CD4-positive, alpha-beta T cell (primary cell): ENCODE measurements at regions of chr14 and their contacts with region 1.

Region 1: DNA sequence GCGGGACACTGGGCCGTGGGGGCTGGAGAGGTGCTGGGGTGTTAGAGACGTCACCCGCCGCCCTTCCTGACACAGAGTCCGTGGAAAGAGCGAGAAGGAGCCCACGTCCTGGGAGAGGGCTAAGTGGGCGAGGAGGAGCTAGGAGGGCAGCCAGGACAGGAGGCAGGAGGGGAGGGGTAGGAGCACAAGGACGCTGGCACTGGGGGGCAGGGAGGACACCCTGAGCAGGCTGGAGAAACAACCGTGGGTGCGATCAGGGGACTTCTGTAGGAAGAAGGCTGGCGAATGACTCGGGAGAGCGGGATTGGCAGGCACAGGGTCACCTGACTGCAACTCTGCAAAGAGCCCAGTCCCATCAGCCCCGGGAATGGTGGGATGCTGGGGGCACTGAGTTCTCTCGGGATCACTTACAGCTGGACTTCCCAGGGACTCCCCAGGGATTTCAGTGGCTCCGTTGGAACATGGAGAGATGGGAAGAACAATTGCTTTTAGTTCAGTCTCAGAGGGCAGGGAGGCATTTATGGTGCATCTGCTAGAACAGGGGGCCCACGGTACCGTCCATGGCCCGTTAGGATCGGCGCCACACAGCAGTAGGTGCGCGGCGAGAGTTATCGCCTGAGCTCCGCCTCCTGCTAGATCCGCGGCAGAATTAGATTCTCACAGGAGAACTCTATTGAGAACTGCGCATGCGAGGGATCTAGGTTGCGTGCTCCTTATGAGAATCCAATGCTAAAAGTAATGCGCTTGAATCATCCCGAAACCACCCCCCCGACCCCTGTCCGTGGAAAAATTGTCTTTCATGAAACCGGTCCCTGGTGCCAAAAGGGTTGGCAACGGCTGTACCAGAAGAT is 24.3 kb downstream of the UBR7 start:
- DNase-seq: peak in 1 of 14 experiments; percentile 4
- ATAC-seq: no peak
- H3K4me3 ChIP-seq: peak overlapping the region; percentile 12
- H3K4me3 Mint-ChIP-seq: peak overlapping the region; percentile 39
- H3K27ac ChIP-seq: no peak overlapping the region
- H3K27ac Mint-ChIP-seq: no peak overlapping the region
- H3K4me1 ChIP-seq: peaks cover 17% of the 10 kb centered on the region
- H3K4me1 Mint-ChIP-seq: peaks cover 11% of the 10 kb centered on the region
- H3K27me3 ChIP-seq: no peaks in the 10 kb centered on the region
- H3K27me3 Mint-ChIP-seq: no peaks in the 10 kb centered on the region
- CTCF ChIP-seq: no peak

Region 2: DNA sequence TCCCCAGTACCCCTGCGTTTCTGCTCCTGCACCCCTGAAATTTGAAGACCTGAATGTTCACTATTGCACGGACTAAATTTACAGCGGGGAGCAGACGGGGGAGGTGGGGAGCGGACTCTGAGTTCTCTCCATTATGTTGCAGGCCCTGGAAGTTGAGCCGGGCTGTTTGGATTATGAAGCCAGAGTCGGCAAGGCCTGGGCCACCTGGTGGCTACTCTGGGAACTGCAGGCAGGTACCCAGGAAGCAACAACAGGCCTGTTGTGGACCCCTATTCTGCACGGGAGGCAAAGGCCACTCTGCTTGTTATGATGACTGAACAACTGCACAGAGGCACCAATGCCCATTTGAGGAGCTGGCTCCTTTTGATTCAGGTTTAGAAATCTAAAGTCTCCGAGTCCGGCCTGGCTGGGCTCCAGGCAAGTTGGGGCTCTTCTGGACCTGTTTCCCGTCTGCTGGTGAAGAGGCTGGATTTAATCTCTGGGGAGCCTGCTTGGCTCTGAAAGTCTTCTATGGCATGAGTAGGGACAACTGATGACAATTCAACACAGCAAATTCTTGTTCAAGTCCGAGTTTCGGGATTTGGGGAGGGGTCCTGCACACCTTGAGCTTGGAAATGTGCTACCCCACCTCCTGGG is 661.7 kb after region 1 on chr14:
- CTCF ChIA-PET with region 1: no interaction called
- POLR2A ChIA-PET with region 1: no interaction called
- intact Hi-C with region 1: loop called in 1 of 2 experiments (anchors 5 kb)
- DNase-seq: peak; percentile 44 to 78 (median 63)
- ATAC-seq: peak; percentile 61
- H3K4me3 ChIP-seq: no peak overlapping the region
- H3K4me3 Mint-ChIP-seq: no peak overlapping the region
- H3K27ac ChIP-seq: no peak overlapping the region
- H3K27ac Mint-ChIP-seq: no peak overlapping the region
- H3K4me1 ChIP-seq: peaks cover 3% of the 10 kb centered on the region
- H3K4me1 Mint-ChIP-seq: no peaks in the 10 kb centered on the region
- H3K27me3 ChIP-seq: peaks cover 0 to 22% of the 10 kb centered on the region in 2 experiments
- H3K27me3 Mint-ChIP-seq: peaks cover 30% of the 10 kb centered on the region
- CTCF ChIP-seq: peak; percentile 100